Activated CD4-positive, alpha-beta T cell treated with anti-CD3 and anti-CD28 coated beads, Interleukin-2, amount 10 ng/mL, durations not matched to agents 7 days and 5 days (primary cell): ENCODE measurements at regions of chr19 and their contacts with region 1.

Region 1: GRCh38 chr19:54448774-54449700 is at the start of gene LENG8:
- DNase-seq: peak; percentile 97
- H3K4me3 Mint-ChIP-seq: peak within 1 kb of the TSS; percentile 95
- H3K27ac Mint-ChIP-seq: peak within 1 kb of the TSS; percentile 99
- H3K4me1 Mint-ChIP-seq: peaks cover 44% of the 10 kb centered on the region
- H3K27me3 Mint-ChIP-seq: no peaks in the 10 kb centered on the region
- total RNA-seq, gene LENG8: 245 to 248 TPM

Region 2: DNA sequence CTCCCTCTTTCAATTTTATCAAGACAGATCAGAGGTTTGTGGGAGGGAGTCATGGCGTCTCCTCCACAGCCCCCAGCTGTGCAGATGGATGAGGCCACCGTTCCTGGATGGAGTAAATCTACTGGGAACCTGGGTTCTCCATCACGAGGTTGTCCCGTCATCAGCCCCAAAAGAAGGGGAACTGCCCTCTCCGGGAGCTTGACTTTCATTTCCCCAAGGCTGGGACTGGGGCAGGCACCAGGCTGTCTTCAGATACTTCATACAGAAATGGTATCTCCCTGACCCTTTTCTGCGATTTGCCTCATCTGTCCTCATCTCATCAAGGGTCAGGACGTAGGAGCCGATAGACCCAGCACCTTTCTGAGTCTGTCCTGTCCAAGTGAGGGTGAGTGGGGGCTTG is 177.9 kb before region 1 on chr19:
- CTCF ChIA-PET with region 1: no interaction called
- POLR2A ChIA-PET with region 1: no interaction called
- DNase-seq: no peak
- H3K4me3 Mint-ChIP-seq: no peak overlapping the region
- H3K27ac Mint-ChIP-seq: no peak overlapping the region
- H3K4me1 Mint-ChIP-seq: no peaks in the 10 kb centered on the region
- H3K27me3 Mint-ChIP-seq: peaks cover 26% of the 10 kb centered on the region

Region 3: GRCh38 chr19:54463531-54464043 is 14.6 kb after region 1 on chr19 and contains the start of gene LENG9:
- CTCF ChIA-PET with region 1: interaction called, 8 read pairs
- POLR2A ChIA-PET with region 1: interaction called, 12 read pairs
- DNase-seq: peak; percentile 98
- H3K4me3 Mint-ChIP-seq: peak within 1 kb of the TSS; percentile 79
- H3K27ac Mint-ChIP-seq: peak within 1 kb of the TSS; percentile 89
- H3K4me1 Mint-ChIP-seq: peaks cover 38% of the 10 kb centered on the region
- H3K27me3 Mint-ChIP-seq: peaks cover 16% of the 10 kb centered on the region
- total RNA-seq, gene LENG9: 3.8 to 5.4 TPM

Region 4: DNA sequence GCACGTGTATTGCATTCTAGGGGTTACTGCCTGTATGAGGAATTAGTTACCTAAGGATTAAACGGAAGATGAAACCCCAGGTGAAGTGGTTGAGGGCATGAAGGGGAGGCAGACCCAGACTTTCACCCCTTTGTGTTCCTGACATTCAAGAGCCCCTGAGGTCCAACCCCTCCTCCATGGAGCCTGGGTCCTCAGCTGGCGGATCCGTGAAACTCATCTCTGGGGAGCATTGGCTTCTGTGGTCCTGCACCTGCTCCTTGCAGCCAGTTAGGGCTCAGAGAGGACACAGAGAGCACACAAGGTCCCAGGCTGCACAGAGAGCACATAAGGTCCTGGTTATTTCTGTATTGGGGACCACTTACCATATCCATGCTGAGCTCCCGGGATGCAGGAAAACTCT is 137.4 kb after region 1 on chr19:
- CTCF ChIA-PET with region 1: no interaction called
- POLR2A ChIA-PET with region 1: no interaction called
- DNase-seq: no peak
- H3K4me3 Mint-ChIP-seq: no peak overlapping the region
- H3K27ac Mint-ChIP-seq: no peak overlapping the region
- H3K4me1 Mint-ChIP-seq: no peaks in the 10 kb centered on the region
- H3K27me3 Mint-ChIP-seq: peaks cover 28% of the 10 kb centered on the region